ENCODE measurements at regions of chr5 and their contacts with region 1.

Region 1: GRCh38 chr5:157761690-157762621 is 18.4 kb downstream of the LSM11 start:
- DNase-seq: peak; percentile 25
- ATAC-seq: peak; percentile 88
- H3K4me3 Mint-ChIP-seq: no peak overlapping the region
- H3K27ac Mint-ChIP-seq: no peak overlapping the region
- H3K4me1 Mint-ChIP-seq: peaks cover 4% of the 10 kb centered on the region
- H3K27me3 Mint-ChIP-seq: no peaks in the 10 kb centered on the region
- CTCF ChIP-seq: peak; percentile 82

Region 2: DNA sequence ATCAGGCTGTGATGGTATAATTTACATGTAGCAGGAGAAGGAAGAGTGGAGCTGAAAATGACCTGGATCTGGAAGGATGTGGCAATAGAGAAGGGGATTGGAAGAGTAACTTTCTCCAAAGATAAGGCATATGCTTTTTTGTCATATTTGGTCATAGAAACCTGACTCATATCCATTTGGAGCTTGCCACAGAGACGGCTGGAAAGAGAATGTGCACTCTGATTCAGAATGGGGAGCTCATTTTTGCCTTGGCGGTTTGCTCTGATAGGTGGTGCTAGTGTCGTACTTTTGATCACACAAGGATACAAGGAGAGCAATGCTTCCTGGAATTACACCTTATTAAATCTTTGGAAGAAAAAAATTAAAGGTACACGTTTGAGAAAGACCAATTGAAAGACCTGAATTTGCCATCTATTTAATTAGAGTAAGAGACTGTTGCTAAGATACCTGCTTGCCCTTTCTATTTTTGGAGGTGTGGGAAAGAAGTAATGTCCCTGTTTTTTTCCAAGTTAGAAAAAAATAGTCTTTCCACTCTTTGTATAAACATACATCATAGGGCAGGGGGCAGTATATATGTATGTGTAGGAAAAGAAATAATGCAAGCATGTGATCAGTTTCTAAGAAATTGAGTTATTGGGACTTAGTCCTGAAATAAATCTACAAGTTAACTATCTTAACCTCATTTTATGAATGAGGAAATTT is 13.0 kb before region 1 on chr5:
- CTCF ChIA-PET with region 1: interaction called, 51 read pairs
- POLR2A ChIA-PET with region 1: interaction called, 5 read pairs
- intact Hi-C with region 1: no loop called
- DNase-seq: no peak
- ATAC-seq: no peak
- H3K4me3 Mint-ChIP-seq: no peak overlapping the region
- H3K27ac Mint-ChIP-seq: no peak overlapping the region
- H3K4me1 Mint-ChIP-seq: peaks cover 48% of the 10 kb centered on the region
- H3K27me3 Mint-ChIP-seq: no peaks in the 10 kb centered on the region
- CTCF ChIP-seq: no peak

Region 3: GRCh38 chr5:157772127-157772526 is 10.2 kb after region 1 on chr5:
- CTCF ChIA-PET with region 1: interaction called, 21 read pairs
- POLR2A ChIA-PET with region 1: no interaction called
- intact Hi-C with region 1: no loop called
- DNase-seq: no peak
- ATAC-seq: no peak
- H3K4me3 Mint-ChIP-seq: no peak overlapping the region
- H3K27ac Mint-ChIP-seq: no peak overlapping the region
- H3K4me1 Mint-ChIP-seq: peaks cover 2% of the 10 kb centered on the region
- H3K27me3 Mint-ChIP-seq: no peaks in the 10 kb centered on the region
- CTCF ChIP-seq: no peak

Region 4: DNA sequence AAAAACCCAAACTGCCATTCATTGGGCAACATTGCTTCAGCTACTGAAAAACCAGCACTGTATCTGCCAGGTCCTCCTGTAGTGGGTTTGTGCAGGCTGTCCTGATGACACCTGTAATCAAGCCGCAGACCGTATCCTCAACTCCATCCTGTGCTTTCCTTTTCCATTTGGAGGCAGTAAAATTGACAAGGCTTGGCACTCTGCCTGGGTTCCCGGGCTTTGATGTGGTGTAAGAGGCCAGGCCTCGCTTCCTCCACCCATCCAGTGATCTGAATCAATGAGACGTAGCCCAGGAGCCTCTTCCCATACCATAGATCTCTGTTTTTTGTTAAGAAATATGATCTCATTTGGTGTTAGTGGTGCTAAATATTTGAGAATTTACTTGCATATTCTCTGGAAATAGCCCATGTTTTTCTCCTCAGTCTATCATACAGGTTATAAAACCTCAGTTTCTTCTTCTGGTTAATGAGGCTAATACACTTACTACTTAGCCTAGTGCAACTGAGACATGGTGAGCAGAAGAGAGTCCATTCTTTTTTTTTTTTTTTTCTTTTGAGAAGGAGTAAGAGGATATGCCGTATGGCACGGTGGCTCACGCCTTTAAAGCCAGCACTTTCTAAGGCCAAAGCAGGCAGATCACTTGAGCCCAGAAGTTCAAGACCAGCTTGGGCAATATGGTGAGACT is 16.3 kb after region 1 on chr5:
- CTCF ChIA-PET with region 1: interaction called, 21 read pairs
- POLR2A ChIA-PET with region 1: no interaction called
- intact Hi-C with region 1: no loop called
- DNase-seq: no peak
- ATAC-seq: no peak
- H3K4me3 Mint-ChIP-seq: no peak overlapping the region
- H3K27ac Mint-ChIP-seq: no peak overlapping the region
- H3K4me1 Mint-ChIP-seq: no peaks in the 10 kb centered on the region
- H3K27me3 Mint-ChIP-seq: no peaks in the 10 kb centered on the region
- CTCF ChIP-seq: no peak

Region 5: GRCh38 chr5:157793301-157793700 is 31.3 kb after region 1 on chr5:
- CTCF ChIA-PET with region 1: interaction called, 15 read pairs
- POLR2A ChIA-PET with region 1: no interaction called
- intact Hi-C with region 1: no loop called
- DNase-seq: peak; percentile 5
- ATAC-seq: peak; percentile 47
- H3K4me3 Mint-ChIP-seq: no peak overlapping the region
- H3K27ac Mint-ChIP-seq: peak overlapping the region; percentile 9
- H3K4me1 Mint-ChIP-seq: peaks cover 9% of the 10 kb centered on the region
- H3K27me3 Mint-ChIP-seq: no peaks in the 10 kb centered on the region
- CTCF ChIP-seq: no peak

Region 6: DNA sequence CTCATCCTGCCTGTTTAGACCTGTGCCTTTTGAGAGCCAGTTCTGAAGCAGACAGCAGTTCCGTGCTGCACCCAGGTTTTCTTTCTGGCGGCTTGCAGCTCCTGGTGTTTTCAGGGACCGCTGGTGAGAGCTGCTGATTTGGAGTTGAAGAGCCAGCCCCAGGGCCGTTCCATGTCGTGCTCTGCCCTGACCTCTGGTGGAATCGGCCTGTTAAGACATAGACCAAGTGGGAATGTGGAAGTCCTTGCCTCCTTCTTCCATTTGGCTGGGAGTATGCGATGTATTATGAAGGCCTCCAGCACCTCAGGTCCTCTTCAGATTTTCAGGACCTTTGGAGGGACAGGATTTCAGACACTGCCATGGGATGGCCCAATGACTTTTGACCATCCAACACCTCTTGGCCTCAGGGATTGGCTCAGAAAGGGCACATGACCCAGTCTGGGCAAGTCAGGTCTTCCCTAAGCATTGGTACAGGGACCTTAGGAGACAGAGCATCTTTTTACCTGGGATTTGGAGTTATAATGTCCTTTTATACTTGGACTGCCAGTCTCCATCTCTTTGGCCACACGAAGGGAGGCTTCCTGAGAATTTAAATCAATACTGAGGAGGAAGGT is 233.1 kb after region 1 on chr5:
- CTCF ChIA-PET with region 1: interaction called, 29 read pairs
- POLR2A ChIA-PET with region 1: no interaction called
- intact Hi-C with region 1: loop called (anchors 5 kb)
- DNase-seq: peak; percentile 58
- ATAC-seq: peak; percentile 91
- H3K4me3 Mint-ChIP-seq: no peak overlapping the region
- H3K27ac Mint-ChIP-seq: no peak overlapping the region
- H3K4me1 Mint-ChIP-seq: peaks cover 12% of the 10 kb centered on the region
- H3K27me3 Mint-ChIP-seq: peaks cover 19% of the 10 kb centered on the region
- CTCF ChIP-seq: peak; percentile 65

Measured in activated CD8-positive, alpha-beta T cell treated with anti-CD3 and anti-CD28 coated beads for 36 hours (primary cell).